Transverse colon (tissue), 4 donors: ENCODE measurements at regions of chr6 and their contacts with region 1.

Region 1: GRCh38 chr6:157756708-157757429 is 66.2 kb upstream of the SNX9 start:
- DNase-seq: peak; percentile 92
- H3K4me3 ChIP-seq: no peak overlapping the region
- H3K27ac ChIP-seq: peak overlapping the region; percentile 20 to 55 (median 46)
- H3K4me1 ChIP-seq: peaks cover 16 to 29% (median 20%) of the 10 kb centered on the region in 4 donors
- H3K27me3 ChIP-seq: no peaks in the 10 kb centered on the region
- CTCF ChIP-seq: peak; percentile 81 to 94 (median 86)
- EP300 ChIP-seq: no peak
- POLR2A ChIP-seq: no peak

Region 2: GRCh38 chr6:156098836-156099235 is 1658.0 kb before region 1 on chr6:
- in situ Hi-C with region 1: no loop called
- intact Hi-C with region 1: no loop called
- DNase-seq: no peak
- H3K4me3 ChIP-seq: no peak overlapping the region
- H3K27ac ChIP-seq: no peak overlapping the region
- H3K4me1 ChIP-seq: no peaks in the 10 kb centered on the region
- H3K27me3 ChIP-seq: no peaks in the 10 kb centered on the region
- CTCF ChIP-seq: no peak
- EP300 ChIP-seq: no peak
- POLR2A ChIP-seq: no peak

Region 3: DNA sequence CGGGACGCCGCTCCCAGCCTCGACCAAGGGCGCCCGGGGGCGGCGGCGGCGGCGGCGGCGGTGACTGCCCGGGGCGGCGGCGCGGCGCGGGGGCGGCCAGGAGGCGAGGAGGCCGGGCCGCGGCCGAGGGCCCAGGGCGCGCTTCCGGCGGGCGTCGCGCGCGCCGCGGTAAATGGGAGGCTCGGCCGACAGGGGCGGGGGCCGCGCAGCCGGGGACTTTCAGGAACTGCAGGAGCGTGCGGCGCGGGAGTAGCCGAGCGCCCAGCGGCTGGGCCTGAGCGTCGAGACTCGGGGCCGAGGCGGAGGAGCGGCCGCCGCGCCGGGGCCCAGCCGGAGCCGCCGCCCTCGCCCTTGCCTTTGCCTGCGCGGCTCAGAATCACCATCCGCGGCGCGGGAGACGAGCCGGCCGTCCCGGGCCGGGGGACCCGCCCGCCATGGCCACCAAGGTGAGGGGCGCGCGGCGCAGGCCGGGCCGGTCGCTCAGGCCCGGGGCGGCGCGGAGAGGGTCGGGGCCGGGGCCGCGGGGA is 66.2 kb after region 1 on chr6 and contains the start of gene SNX9:
- in situ Hi-C with region 1: loop called in 1 of 4 experiments (anchors 10 kb)
- intact Hi-C with region 1: loop called (anchors 5 kb)
- DNase-seq: peak; percentile 83
- H3K4me3 ChIP-seq: peak within 1 kb of the TSS; percentile 52 to 100 (median 98)
- H3K27ac ChIP-seq: peak within 1 kb of the TSS; percentile 92 to 99 (median 98)
- H3K4me1 ChIP-seq: peaks cover 0 to 29% (median 19%) of the 10 kb centered on the region in 4 donors
- H3K27me3 ChIP-seq: no peaks in the 10 kb centered on the region
- CTCF ChIP-seq: no peak
- EP300 ChIP-seq: no peak
- POLR2A ChIP-seq: peak; percentile 35
- total RNA-seq, gene SNX9: 13.7 to 57.2 (median 50.7) TPM

Region 4: DNA sequence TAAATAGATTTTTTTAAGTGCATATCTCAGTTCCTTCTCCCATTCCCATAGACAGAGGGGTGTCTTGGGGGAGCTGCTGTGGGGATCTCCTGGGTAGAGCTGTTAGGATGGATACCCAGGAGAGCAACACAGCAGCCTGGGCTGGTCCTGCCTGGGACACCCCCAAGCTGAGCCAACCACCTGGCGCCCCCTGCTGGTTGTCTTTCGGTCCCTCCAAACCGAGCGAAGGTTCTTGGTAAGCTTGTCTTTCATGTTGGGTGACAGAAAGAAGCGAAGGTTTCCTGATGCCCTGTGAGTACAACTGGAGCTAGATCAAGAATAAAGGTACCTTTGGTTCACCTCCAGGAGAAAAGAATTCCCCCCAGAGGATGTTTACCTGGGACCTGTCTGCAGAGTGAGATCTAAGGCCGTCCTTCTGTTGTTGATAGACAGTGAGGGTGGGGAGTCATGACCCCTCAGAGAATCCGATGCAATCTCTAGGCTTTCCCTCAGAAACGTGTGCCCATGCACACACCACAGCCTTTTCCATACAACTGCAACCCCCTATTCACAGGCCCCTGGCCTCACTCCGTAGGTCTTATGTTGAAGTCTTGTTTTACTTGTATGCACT is 117.0 kb after region 1 on chr6:
- in situ Hi-C with region 1: loop called (anchors 5 to 10 kb)
- intact Hi-C with region 1: loop called (anchors 5 kb)
- DNase-seq: peak; percentile 88
- H3K4me3 ChIP-seq: no peak overlapping the region
- H3K27ac ChIP-seq: no peak overlapping the region
- H3K4me1 ChIP-seq: no peaks in the 10 kb centered on the region
- H3K27me3 ChIP-seq: no peaks in the 10 kb centered on the region
- CTCF ChIP-seq: peak; percentile 78 to 85 (median 79)
- EP300 ChIP-seq: no peak
- POLR2A ChIP-seq: no peak

Region 5: GRCh38 chr6:157879873-157880254 is 123.0 kb after region 1 on chr6:
- in situ Hi-C with region 1: loop called in 2 of 4 experiments (anchors 5 to 10 kb)
- intact Hi-C with region 1: no loop called
- DNase-seq: no peak
- H3K4me3 ChIP-seq: no peak overlapping the region
- H3K27ac ChIP-seq: no peak overlapping the region
- H3K4me1 ChIP-seq: peaks cover 0 to 3% (median 0%) of the 10 kb centered on the region in 4 donors
- H3K27me3 ChIP-seq: no peaks in the 10 kb centered on the region
- CTCF ChIP-seq: no peak
- EP300 ChIP-seq: no peak
- POLR2A ChIP-seq: no peak

Region 6: GRCh38 chr6:158060455-158061360 is 303.8 kb after region 1 on chr6:
- in situ Hi-C with region 1: loop called in 2 of 4 experiments (anchors 10 to 25 kb)
- intact Hi-C with region 1: no loop called
- DNase-seq: peak; percentile 62
- H3K4me3 ChIP-seq: no peak overlapping the region
- H3K27ac ChIP-seq: peak overlapping the region; percentile 74 to 81 (median 76)
- H3K4me1 ChIP-seq: peaks cover 13 to 18% (median 16%) of the 10 kb centered on the region in 4 donors
- H3K27me3 ChIP-seq: no peaks in the 10 kb centered on the region
- CTCF ChIP-seq: no peak
- EP300 ChIP-seq: no peak
- POLR2A ChIP-seq: peak; percentile 6